Activated CD4-positive, alpha-beta memory T cell treated with anti-CD3 and anti-CD28 coated beads, Interleukin-2, amount 10 ng/mL, durations not matched to agents 7 days and 5 days (primary cell): ENCODE measurements at regions of chr1 and their contacts with region 1.

Region 1: GRCh38 chr1:225962440-225962975 is 21.5 kb upstream of the LEFTY2 start:
- DNase-seq: peak; percentile 60
- H3K4me3 Mint-ChIP-seq: no peak overlapping the region
- H3K27ac Mint-ChIP-seq: no peak overlapping the region
- H3K4me1 Mint-ChIP-seq: no peaks in the 10 kb centered on the region
- H3K27me3 Mint-ChIP-seq: no peaks in the 10 kb centered on the region

Region 2: GRCh38 chr1:225908773-225909172 is 53.7 kb before region 1 on chr1:
- CTCF ChIA-PET with region 1: no interaction called
- POLR2A ChIA-PET with region 1: no interaction called
- DNase-seq: no peak
- H3K4me3 Mint-ChIP-seq: no peak overlapping the region
- H3K27ac Mint-ChIP-seq: no peak overlapping the region
- H3K4me1 Mint-ChIP-seq: peaks cover 4% of the 10 kb centered on the region
- H3K27me3 Mint-ChIP-seq: peaks cover 13% of the 10 kb centered on the region

Region 3: GRCh38 chr1:225944951-225945350 is 17.6 kb before region 1 on chr1:
- CTCF ChIA-PET with region 1: interaction called, 10 read pairs
- POLR2A ChIA-PET with region 1: interaction called, 4 read pairs
- DNase-seq: no peak
- H3K4me3 Mint-ChIP-seq: no peak overlapping the region
- H3K27ac Mint-ChIP-seq: no peak overlapping the region
- H3K4me1 Mint-ChIP-seq: peaks cover 11% of the 10 kb centered on the region
- H3K27me3 Mint-ChIP-seq: peaks cover 23% of the 10 kb centered on the region

Region 4: GRCh38 chr1:225977937-225978748 is 15.6 kb after region 1 on chr1:
- CTCF ChIA-PET with region 1: interaction called, 32 read pairs
- POLR2A ChIA-PET with region 1: no interaction called
- DNase-seq: peak; percentile 10
- H3K4me3 Mint-ChIP-seq: no peak overlapping the region
- H3K27ac Mint-ChIP-seq: no peak overlapping the region
- H3K4me1 Mint-ChIP-seq: peaks cover 10% of the 10 kb centered on the region
- H3K27me3 Mint-ChIP-seq: no peaks in the 10 kb centered on the region

Region 5: DNA sequence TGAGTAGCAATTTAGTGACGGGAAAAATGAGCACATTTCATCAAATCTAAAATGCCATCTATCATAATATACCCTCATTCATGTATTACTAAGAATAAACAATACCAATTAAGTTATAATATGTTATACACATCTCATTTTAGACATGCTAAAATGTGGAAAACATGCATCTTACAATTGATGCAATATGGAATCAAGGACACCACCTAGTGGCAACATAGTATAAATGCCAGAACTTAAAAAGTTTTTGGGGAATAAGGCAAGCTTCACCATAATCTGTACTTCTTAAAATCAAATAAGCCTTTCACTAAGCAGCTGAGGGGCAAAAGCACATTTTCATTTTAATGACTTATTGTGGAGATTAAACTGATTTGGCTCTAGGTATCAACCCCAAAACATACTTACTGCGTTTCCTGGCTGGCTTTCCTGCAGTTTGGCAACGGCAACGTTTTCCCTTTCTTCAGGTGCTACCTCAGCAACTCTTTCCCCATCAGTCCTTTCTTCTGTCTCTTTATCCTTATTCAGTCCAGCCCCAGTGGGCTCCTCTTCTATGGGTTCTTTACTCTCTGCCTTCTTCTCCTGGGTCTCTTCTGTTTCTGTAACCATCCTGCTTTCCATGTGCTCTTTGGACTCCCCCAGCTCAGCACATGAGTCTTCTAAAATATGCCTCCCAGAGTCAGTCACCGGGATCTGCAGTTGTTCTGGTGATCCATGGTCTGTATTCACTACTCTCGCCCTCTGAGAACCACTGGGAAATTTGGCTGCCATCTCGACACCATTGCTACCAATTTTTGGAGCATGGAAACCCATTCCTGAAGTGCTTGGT is 25.2 kb after region 1 on chr1:
- CTCF ChIA-PET with region 1: interaction called, 24 read pairs
- POLR2A ChIA-PET with region 1: no interaction called
- DNase-seq: no peak
- H3K4me3 Mint-ChIP-seq: no peak overlapping the region
- H3K27ac Mint-ChIP-seq: peak overlapping the region; percentile 4
- H3K4me1 Mint-ChIP-seq: peaks cover 35% of the 10 kb centered on the region
- H3K27me3 Mint-ChIP-seq: no peaks in the 10 kb centered on the region